ENCODE measurements at regions of chr3 and their contacts with region 1.

Region 1: GRCh38 chr3:132803889-132804288 is 81.7 kb upstream of the NPHP3 start:
- DNase-seq: no peak
- ATAC-seq: peak; percentile 82
- H3K4me3 ChIP-seq: no peak overlapping the region
- H3K27ac ChIP-seq: no peak overlapping the region
- H3K4me1 ChIP-seq: no peaks in the 10 kb centered on the region
- H3K27me3 ChIP-seq: no peaks in the 10 kb centered on the region
- CTCF ChIP-seq: peak; percentile 40
- EP300 ChIP-seq: no peak
- POLR2A ChIP-seq: no peak
- RAD21 ChIP-seq: no peak

Region 2: DNA sequence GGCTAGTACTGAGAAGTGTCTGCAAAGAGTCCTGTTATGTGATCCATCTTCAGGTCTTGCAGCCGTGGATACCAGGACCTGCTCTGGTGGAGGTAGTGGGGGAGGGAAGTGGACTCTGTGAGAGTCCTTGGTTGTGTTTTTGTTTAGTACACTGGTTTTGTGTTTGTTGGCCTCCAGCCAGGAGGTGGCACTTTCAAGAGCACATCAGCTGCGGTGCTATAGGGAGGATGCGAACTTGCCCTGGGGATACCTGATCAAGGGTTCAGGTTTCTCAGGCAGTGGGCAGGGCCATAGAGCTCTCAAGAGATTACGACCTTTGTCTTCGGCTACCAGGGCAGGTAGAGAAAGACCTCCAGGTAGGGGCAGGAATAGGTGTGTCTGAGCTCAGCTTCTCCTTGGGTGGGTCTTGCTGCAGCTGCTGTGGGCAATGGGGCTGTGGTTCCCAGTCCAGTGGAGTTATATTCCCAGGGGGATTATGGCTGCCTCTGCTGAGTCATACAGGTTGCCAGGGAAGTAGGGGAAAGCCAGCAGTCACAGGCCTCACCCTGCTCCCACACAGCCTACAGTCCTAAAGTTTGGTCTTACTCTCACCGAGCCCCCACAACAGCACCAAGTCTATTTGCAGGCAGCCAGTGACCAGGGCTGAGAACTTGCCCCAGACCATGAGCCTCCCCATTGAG is 51.1 kb after region 1 on chr3:
- CTCF ChIA-PET with region 1: no interaction called
- POLR2A ChIA-PET with region 1: no interaction called
- in situ Hi-C with region 1: no loop called
- intact Hi-C with region 1: no loop called
- DNase-seq: no peak
- ATAC-seq: no peak
- H3K4me3 ChIP-seq: no peak overlapping the region
- H3K27ac ChIP-seq: no peak overlapping the region
- H3K4me1 ChIP-seq: no peaks in the 10 kb centered on the region
- H3K27me3 ChIP-seq: no peaks in the 10 kb centered on the region
- CTCF ChIP-seq: no peak
- EP300 ChIP-seq: no peak
- POLR2A ChIP-seq: no peak
- RAD21 ChIP-seq: no peak

Region 3: DNA sequence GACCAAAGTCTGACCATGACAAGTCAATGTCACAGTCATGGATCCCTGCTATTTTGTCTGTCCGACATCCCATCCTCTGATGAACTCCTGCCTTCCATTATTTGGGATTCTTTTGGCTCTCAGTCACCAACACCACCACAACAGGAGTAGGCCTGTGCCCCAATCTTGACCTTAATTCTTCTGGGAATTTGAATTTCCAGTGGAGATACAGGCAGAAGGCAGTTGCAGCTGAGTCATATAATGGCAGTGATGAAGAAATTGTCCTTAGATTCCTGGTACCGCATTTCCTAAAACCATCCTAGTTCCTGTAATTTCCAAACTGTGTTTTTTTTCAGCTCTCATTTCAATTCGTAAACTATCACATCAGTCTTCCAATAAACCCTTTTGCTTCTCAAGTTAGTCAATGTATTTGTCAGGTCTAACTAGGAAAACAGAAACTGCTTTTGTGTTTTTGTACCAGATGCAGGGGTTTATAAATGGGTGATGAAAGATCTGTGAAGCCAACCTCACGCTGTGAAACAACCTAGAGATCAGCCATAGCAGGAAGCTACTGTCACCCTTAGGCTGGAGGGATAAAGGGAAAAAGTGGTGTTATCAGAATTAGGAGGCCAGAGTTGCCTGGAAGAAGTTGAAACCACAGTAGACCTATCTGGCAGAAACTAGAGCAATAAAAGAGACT is 108.0 kb after region 1 on chr3:
- CTCF ChIA-PET with region 1: no interaction called
- POLR2A ChIA-PET with region 1: no interaction called
- in situ Hi-C with region 1: loop called (anchors 25 kb)
- intact Hi-C with region 1: no loop called
- DNase-seq: no peak
- ATAC-seq: no peak
- H3K4me3 ChIP-seq: no peak overlapping the region
- H3K27ac ChIP-seq: no peak overlapping the region
- H3K4me1 ChIP-seq: no peaks in the 10 kb centered on the region
- H3K27me3 ChIP-seq: no peaks in the 10 kb centered on the region
- CTCF ChIP-seq: no peak
- EP300 ChIP-seq: no peak
- POLR2A ChIP-seq: no peak
- RAD21 ChIP-seq: no peak

Measured in HepG2 (cell line).